A549 (cell line): ENCODE measurements at regions of chr20 and their contacts with region 1.

Region 1: GRCh38 chr20:35303735-35304491 is 11.7 kb upstream of the FAM83C start:
- DNase-seq: peak; percentile 89 to 92
- ATAC-seq: peak; percentile 52 to 73
- H3K4me3 ChIP-seq: no peak overlapping the region
- H3K27ac ChIP-seq: peak overlapping the region; percentile 95 to 96
- H3K4me1 ChIP-seq: peaks cover 68% of the 10 kb centered on the region
- CTCF ChIP-seq: peak; percentile 96
- EP300 ChIP-seq: no peak
- POLR2A ChIP-seq: no peak
- RAD21 ChIP-seq: peak; percentile 96 to 97

Region 2: DNA sequence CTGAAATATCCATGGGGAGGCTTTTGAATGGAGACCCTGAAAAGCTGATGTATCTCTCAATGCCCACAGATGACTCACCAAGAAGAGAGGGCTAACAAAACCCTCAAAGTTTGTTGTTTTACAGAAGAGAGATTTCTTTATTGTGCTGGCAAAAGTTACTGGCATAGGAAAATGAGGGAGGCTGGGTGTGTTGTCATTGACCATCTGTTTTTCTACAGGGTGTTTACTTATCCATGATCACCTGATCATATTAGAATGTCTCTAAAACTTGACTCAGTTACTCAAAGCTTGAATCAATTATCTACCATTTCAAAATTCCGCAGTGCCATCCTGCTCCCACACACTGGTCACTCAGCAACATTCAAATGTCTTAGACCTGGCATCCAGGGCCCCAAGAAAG is 488.3 kb before region 1 on chr20:
- CTCF ChIA-PET with region 1: no interaction called
- POLR2A ChIA-PET with region 1: no interaction called
- DNase-seq: no peak
- ATAC-seq: no peak
- H3K4me3 ChIP-seq: no peak overlapping the region
- H3K27ac ChIP-seq: no peak overlapping the region
- H3K4me1 ChIP-seq: peaks cover 3% of the 10 kb centered on the region; the same call in 1 of the 3 replicates
- CTCF ChIP-seq: no peak
- EP300 ChIP-seq: no peak
- POLR2A ChIP-seq: no peak
- RAD21 ChIP-seq: no peak

Region 3: DNA sequence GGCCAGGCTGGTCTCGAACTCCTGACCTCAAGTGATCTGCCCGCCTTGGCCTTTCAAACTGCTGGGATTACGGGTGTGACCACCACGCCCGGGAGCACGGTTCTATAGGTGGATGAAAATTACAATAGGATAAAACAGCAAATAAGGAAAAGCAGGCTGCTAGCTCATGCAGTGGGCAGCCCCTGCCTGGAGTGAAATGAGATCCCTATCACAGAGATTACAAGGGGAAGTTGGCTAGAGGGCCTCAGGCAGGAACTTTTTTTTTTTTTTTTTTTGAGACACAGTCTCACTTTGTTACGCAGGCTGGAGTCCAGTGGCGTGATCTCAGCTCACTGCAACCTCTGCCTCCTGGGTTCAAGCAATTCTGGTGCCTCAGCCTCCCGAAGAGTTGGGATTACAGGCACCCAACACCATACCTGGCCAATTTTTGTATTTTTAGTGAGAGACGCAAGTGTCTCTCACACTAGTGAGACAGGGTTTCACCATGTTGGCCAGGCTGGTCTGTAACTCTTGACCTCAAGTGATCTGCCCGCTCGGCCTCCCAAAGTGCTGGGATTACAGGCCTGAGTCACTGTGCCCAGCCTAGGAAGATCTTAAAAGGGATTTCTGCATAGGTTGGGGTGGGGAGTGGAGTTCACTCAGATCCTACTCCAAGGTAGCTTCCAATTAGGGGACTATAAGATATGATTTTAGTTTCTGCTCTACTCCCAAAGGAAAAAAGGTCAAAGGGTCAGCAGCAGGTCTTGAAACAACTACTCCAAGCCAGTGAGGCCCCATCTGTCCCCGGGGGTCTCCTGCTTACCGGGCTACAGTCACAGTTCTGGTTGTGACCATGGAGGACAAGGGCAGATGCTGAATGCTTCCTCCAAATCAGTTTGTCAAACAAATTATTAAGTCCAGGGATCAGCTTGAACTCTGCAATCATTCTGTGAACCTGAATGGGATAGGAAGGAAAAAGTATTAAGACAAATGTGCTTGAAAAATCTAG is 288.4 kb before region 1 on chr20:
- CTCF ChIA-PET with region 1: no interaction called
- POLR2A ChIA-PET with region 1: no interaction called
- DNase-seq: no peak
- ATAC-seq: no peak
- H3K4me3 ChIP-seq: no peak overlapping the region
- H3K27ac ChIP-seq: no peak overlapping the region
- H3K4me1 ChIP-seq: no peaks in the 10 kb centered on the region
- CTCF ChIP-seq: no peak
- EP300 ChIP-seq: no peak
- POLR2A ChIP-seq: no peak
- RAD21 ChIP-seq: no peak

Region 4: DNA sequence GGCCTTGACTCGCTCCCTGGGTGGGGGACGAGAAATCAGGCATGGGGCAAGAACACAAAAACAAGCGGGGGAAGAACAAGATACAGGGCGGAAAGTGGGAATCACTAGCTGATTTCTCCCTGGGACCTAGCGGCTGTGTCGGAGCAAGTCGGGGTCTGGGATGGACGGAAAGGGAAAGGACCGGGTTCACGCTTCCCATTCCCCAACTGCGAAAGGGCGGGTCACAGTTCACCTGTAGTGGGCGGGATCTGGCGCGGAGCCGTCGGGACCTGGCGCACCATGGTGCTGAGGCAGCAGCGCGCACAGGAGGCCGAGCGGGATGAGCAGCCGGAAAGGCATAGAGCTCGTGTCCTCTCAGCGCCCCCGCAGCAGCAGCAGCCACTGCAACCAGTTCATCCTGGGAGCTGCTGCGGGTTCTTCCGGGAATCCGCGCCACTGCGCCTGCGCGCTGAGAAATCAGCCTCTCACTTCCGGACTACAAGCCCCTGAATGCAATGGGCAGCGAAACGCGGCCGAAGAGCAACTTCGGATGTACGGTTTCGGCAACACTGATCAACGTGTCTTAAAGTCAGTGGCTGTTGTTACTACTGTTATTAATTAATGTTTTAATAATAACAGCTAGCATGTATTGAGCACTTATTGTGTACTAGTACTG is 156.9 kb before region 1 on chr20 and contains the start of gene EDEM2:
- CTCF ChIA-PET with region 1: interaction called, 10 read pairs
- POLR2A ChIA-PET with region 1: no interaction called
- DNase-seq: peak; percentile 95 to 97
- ATAC-seq: peak; percentile 95 to 96
- H3K4me3 ChIP-seq: peak within 1 kb of the TSS; percentile 78
- H3K27ac ChIP-seq: peak within 1 kb of the TSS; percentile 89
- H3K4me1 ChIP-seq: peaks cover 17% of the 10 kb centered on the region
- CTCF ChIP-seq: peak; percentile 7; the same call in 1 of the 3 replicates
- EP300 ChIP-seq: no peak
- POLR2A ChIP-seq: peak; percentile 81
- RAD21 ChIP-seq: peak in 1 of 2 experiments; percentile 35; a peak in 2 of 5 replicates
- polyA plus RNA-seq, gene EDEM2: 41.2 and 41.6 TPM in 2 replicates

Region 5: GRCh38 chr20:35284267-35284991 is 19.5 kb before region 1 on chr20 and contains the start of gene EIF6:
- CTCF ChIA-PET with region 1: interaction called, 138 read pairs
- POLR2A ChIA-PET with region 1: interaction called, 11 read pairs
- DNase-seq: peak; percentile 90 to 91
- ATAC-seq: peak; percentile 91 to 93
- H3K4me3 ChIP-seq: peak within 1 kb of the TSS; percentile 91
- H3K27ac ChIP-seq: peak within 1 kb of the TSS; percentile 82 to 98
- H3K4me1 ChIP-seq: peaks cover 27% of the 10 kb centered on the region
- CTCF ChIP-seq: no peak; the same call in 2 of the 3 replicates
- EP300 ChIP-seq: no peak
- POLR2A ChIP-seq: peak; percentile 53
- RAD21 ChIP-seq: no peak
- polyA plus RNA-seq, gene EIF6: 184 and 204 TPM in 2 replicates

Region 6: DNA sequence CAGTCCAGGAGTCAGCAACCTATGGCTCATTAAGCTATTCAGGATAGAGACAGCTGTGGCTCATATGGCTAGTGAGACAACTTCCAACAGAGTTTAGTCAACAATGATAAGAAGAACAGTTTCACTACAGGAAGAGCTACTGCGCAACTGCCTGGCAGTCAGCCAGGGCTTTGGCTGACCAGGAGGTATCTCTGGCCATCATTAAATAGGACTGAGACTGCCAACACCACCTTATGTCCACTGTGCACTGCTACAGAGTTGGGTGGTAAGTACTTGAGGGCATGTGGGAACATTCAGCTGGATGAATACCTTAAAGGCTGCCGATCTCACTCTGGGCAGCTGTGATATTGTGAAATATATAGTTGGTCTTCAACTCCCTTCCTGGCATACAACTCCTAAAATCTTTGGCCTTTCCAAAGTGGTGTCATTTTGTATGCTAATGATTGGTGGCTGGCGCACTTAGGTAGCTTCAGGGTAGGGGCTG is 40.5 kb after region 1 on chr20:
- CTCF ChIA-PET with region 1: interaction called, 33 read pairs
- POLR2A ChIA-PET with region 1: no interaction called
- DNase-seq: peak in 1 of 2 experiments; percentile 63
- ATAC-seq: peak; percentile 56 to 76; a peak in 5 of 6 replicates
- H3K4me3 ChIP-seq: no peak overlapping the region
- H3K27ac ChIP-seq: peak overlapping the region; percentile 7 to 60; a peak in 4 of 6 replicates
- H3K4me1 ChIP-seq: peaks cover 17% of the 10 kb centered on the region
- CTCF ChIP-seq: no peak
- EP300 ChIP-seq: no peak
- POLR2A ChIP-seq: no peak
- RAD21 ChIP-seq: no peak

Region 7: DNA sequence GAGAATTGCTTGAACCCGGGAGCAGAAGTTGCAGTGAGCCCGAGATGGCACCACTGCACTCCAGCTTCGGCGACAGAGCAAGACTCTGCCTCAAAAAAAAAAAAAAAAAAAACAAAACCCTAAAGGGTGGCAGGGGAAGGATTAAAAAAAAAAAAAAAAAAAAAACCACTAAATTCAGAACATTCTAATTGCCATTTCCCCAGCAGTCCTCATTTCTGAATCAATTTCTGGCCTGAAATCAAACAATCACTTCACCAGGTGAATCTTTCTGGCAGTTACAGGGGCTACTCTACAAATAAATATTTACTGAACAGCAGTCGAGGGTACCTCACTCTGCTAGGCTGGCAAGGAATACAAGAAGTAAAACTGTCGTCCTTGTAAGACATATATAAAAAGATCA is 106.7 kb after region 1 on chr20:
- CTCF ChIA-PET with region 1: interaction called, 10 read pairs
- POLR2A ChIA-PET with region 1: interaction called, 3 read pairs
- DNase-seq: no peak
- ATAC-seq: no peak
- H3K4me3 ChIP-seq: peak overlapping the region; percentile 67
- H3K27ac ChIP-seq: peak overlapping the region in 1 of 2 experiments; percentile 90; a peak in 2 of 6 replicates
- H3K4me1 ChIP-seq: peaks cover 9% of the 10 kb centered on the region; the same call in 1 of the 3 replicates
- CTCF ChIP-seq: no peak
- EP300 ChIP-seq: no peak
- POLR2A ChIP-seq: no peak
- RAD21 ChIP-seq: no peak

Region 8: GRCh38 chr20:35454881-35455609 is 151.1 kb after region 1 on chr20 and contains the start of gene CEP250:
- CTCF ChIA-PET with region 1: interaction called, 194 read pairs
- POLR2A ChIA-PET with region 1: interaction called, 7 read pairs
- DNase-seq: peak; percentile 84 to 94
- ATAC-seq: peak; percentile 89 to 94
- H3K4me3 ChIP-seq: peak within 1 kb of the TSS; percentile 71
- H3K27ac ChIP-seq: peak within 1 kb of the TSS; percentile 94 to 97
- H3K4me1 ChIP-seq: peaks cover 10% of the 10 kb centered on the region
- CTCF ChIP-seq: no peak
- EP300 ChIP-seq: no peak
- POLR2A ChIP-seq: peak; percentile 36
- RAD21 ChIP-seq: no peak
- polyA plus RNA-seq, gene CEP250: 13.8 and 16.2 TPM in 2 replicates

Region 9: GRCh38 chr20:35490736-35491181 is 186.8 kb after region 1 on chr20:
- CTCF ChIA-PET with region 1: no interaction called
- POLR2A ChIA-PET with region 1: no interaction called
- DNase-seq: no peak
- ATAC-seq: no peak
- H3K4me3 ChIP-seq: no peak overlapping the region
- H3K27ac ChIP-seq: no peak overlapping the region
- H3K4me1 ChIP-seq: no peaks in the 10 kb centered on the region
- CTCF ChIP-seq: no peak
- EP300 ChIP-seq: no peak
- POLR2A ChIP-seq: no peak
- RAD21 ChIP-seq: no peak